ENCODE measurements at regions of chr3 and their contacts with region 1.

Region 1: GRCh38 chr3:193572426-193572908 is 17.8 kb upstream of the ATP13A4 start:
- DNase-seq: peak; percentile 69
- H3K4me3 ChIP-seq: no peak overlapping the region
- H3K27ac ChIP-seq: no peak overlapping the region
- H3K4me1 ChIP-seq: peaks cover 14% of the 10 kb centered on the region
- H3K27me3 ChIP-seq: no peaks in the 10 kb centered on the region
- CTCF ChIP-seq: peak; percentile 98

Region 2: GRCh38 chr3:192467230-192468140 is 1105.0 kb before region 1 on chr3:
- CTCF ChIA-PET with region 1: no interaction called
- POLR2A ChIA-PET with region 1: no interaction called
- intact Hi-C with region 1: loop called (anchors 1 kb)
- DNase-seq: peak; percentile 56 to 63
- H3K4me3 ChIP-seq: no peak overlapping the region
- H3K27ac ChIP-seq: no peak overlapping the region
- H3K4me1 ChIP-seq: no peaks in the 10 kb centered on the region
- H3K27me3 ChIP-seq: no peaks in the 10 kb centered on the region
- CTCF ChIP-seq: peak; percentile 100

Region 3: GRCh38 chr3:192772240-192772894 is 800.1 kb before region 1 on chr3:
- CTCF ChIA-PET with region 1: interaction called, 12 read pairs
- POLR2A ChIA-PET with region 1: no interaction called
- intact Hi-C with region 1: no loop called
- DNase-seq: peak; percentile 43 to 53
- H3K4me3 ChIP-seq: no peak overlapping the region
- H3K27ac ChIP-seq: no peak overlapping the region
- H3K4me1 ChIP-seq: no peaks in the 10 kb centered on the region
- H3K27me3 ChIP-seq: no peaks in the 10 kb centered on the region
- CTCF ChIP-seq: peak; percentile 80

Region 4: GRCh38 chr3:193040836-193041672 is 531.4 kb before region 1 on chr3:
- CTCF ChIA-PET with region 1: interaction called, 3 read pairs
- POLR2A ChIA-PET with region 1: interaction called, 4 read pairs
- intact Hi-C with region 1: loop called (anchors 5 kb)
- DNase-seq: peak in 1 of 2 experiments; percentile 58
- H3K4me3 ChIP-seq: no peak overlapping the region
- H3K27ac ChIP-seq: no peak overlapping the region
- H3K4me1 ChIP-seq: no peaks in the 10 kb centered on the region
- H3K27me3 ChIP-seq: no peaks in the 10 kb centered on the region
- CTCF ChIP-seq: peak; percentile 81

Region 5: GRCh38 chr3:193465992-193466608 is 106.4 kb before region 1 on chr3:
- CTCF ChIA-PET with region 1: no interaction called
- POLR2A ChIA-PET with region 1: interaction called, 3 read pairs
- intact Hi-C with region 1: loop called (anchors 1 kb)
- DNase-seq: no peak
- H3K4me3 ChIP-seq: no peak overlapping the region
- H3K27ac ChIP-seq: no peak overlapping the region
- H3K4me1 ChIP-seq: no peaks in the 10 kb centered on the region
- H3K27me3 ChIP-seq: peaks cover 18% of the 10 kb centered on the region; the same call in 1 of the 2 replicates
- CTCF ChIP-seq: no peak

Region 6: DNA sequence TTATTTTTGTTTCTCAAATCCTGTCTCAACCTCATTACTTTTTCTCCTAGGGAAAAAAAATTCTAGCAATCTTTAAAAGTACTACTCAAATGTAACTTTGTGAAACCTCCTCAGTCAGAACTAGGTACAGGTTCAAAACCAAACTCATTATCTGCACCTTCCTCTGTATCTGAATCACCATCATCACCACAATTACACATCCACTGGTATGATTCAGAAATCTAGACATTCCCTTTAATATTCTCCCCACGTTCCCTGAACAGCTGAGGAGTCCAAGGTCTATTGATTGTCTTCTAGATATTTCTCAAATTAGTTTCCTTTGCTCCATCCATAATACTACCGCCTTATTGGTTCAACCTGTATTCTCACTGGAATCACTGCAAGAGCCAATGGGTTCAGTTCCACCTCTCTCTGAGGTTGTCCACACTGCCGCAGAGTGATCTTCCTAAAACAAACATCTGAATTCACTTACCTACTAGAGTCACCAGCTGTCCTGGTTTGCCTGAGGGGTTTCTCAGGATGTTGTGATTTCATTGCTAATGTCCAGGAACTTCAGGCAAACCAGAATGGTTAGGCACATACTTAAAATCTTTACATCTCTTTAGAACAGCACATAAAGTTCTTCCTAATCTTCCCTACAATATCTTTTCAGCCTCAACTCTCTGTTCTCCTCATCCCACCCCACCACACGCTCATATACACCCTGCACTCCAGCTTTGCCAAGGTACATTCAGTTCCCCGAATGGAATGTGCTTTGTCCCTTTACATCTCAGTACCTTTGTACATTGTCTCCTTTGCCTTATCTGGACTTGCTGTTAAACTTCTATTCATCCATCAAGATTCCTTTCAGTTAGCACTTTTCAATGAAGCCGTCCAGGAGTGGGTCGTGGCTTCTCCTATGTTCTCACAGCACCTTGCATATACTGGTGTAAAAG is 42.0 kb before region 1 on chr3:
- CTCF ChIA-PET with region 1: no interaction called
- POLR2A ChIA-PET with region 1: no interaction called
- intact Hi-C with region 1: no loop called
- DNase-seq: no peak
- H3K4me3 ChIP-seq: no peak overlapping the region
- H3K27ac ChIP-seq: no peak overlapping the region
- H3K4me1 ChIP-seq: no peaks in the 10 kb centered on the region
- H3K27me3 ChIP-seq: 0 out of 2 replicates have a peak, but pooled peaks cover 11% of the 10 kb centered on the region
- CTCF ChIP-seq: no peak

Region 7: GRCh38 chr3:193592944-193593667 is 20.6 kb after region 1 on chr3 and contains the start of gene OPA1:
- CTCF ChIA-PET with region 1: interaction called, 12 read pairs
- POLR2A ChIA-PET with region 1: no interaction called
- intact Hi-C with region 1: no loop called
- DNase-seq: peak; percentile 98 to 99
- H3K4me3 ChIP-seq: peak within 1 kb of the TSS; percentile 89
- H3K27ac ChIP-seq: peak within 1 kb of the TSS; percentile 61
- H3K4me1 ChIP-seq: peaks cover 38% of the 10 kb centered on the region
- H3K27me3 ChIP-seq: no peaks in the 10 kb centered on the region
- CTCF ChIP-seq: no peak
- total RNA-seq, gene OPA1: 105 and 120 TPM in 2 replicates

Measured in PC-9 (cell line).